ENCODE measurements at regions of chr1 and their contacts with region 1.

Region 1: DNA sequence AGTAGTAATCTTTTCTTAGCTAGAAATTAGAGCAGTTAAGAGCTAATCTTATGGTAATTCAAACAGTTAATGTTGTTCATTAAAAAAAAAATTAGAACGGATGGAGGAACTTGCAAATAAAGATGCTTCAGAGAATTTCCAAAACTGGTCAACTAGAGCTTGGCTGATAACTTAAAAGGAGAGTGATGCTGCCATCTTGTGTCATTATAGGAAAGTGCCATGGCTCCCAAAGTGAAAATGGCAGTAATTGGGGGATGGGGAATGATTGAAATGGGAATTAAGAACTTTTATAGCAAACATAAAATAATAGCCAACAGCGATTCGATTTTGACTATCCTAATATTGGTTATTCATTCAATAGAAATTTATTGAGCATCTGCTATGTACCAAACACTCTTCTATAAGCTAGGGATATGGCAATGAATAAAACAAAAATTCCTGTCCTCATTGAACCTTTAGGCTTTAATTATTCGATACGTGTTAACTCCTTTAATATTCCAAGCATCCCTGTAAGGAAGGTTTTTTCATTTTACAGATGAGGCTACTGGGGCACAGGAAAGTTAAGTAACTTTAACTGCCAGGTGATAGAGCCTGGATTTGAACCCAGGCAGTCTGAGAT is 5.7 kb upstream of the PLPP3 start:
- DNase-seq: peak; percentile 65
- H3K4me3 ChIP-seq: no peak overlapping the region
- H3K27ac ChIP-seq: no peak overlapping the region
- H3K4me1 ChIP-seq: peaks cover 1% of the 10 kb centered on the region
- CTCF ChIP-seq: peak; percentile 96

Region 2: GRCh38 chr1:55284852-55285251 is 1300.2 kb before region 1 on chr1:
- CTCF ChIA-PET with region 1: no interaction called
- POLR2A ChIA-PET with region 1: no interaction called
- intact Hi-C with region 1: loop called (anchors 2 kb)
- DNase-seq: peak; percentile 26
- H3K4me3 ChIP-seq: no peak overlapping the region
- H3K27ac ChIP-seq: no peak overlapping the region
- H3K4me1 ChIP-seq: peaks cover 10% of the 10 kb centered on the region
- CTCF ChIP-seq: peak; percentile 76

Region 3: DNA sequence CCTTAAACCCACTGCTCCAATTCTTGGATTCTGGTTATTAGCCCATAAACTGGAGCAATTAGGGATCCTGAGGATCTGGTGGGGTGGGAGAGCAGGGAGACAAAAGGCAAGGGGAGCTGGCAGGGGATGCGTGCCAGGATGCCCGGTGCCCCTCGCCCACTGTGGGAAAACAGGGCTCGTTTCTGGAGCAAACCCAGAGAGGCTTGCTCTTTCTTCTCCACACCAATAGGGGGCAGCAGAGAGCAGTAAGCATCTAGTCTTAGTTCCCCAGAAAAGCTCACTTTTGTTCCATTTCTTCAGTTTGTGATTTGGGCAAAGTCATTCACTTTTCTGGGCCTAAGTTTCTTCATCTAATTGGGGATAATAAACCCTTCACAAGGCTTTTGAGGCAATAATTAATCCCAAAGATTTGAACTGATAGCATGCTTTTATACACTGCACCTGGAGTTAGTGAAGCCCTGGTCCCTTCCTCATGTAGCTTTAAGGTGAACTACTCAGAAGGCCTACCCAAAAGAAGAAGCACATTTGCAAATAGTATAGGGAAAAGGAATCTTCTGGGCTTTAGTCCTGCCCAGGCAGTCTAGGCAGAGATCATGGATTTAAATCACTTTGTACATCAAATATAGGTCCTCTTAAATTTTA is 1209.3 kb before region 1 on chr1:
- CTCF ChIA-PET with region 1: no interaction called
- POLR2A ChIA-PET with region 1: no interaction called
- intact Hi-C with region 1: loop called (anchors 5 kb)
- DNase-seq: peak; percentile 55
- H3K4me3 ChIP-seq: no peak overlapping the region
- H3K27ac ChIP-seq: no peak overlapping the region
- H3K4me1 ChIP-seq: no peaks in the 10 kb centered on the region
- CTCF ChIP-seq: peak; percentile 91

Region 4: GRCh38 chr1:55478742-55479141 is 1106.3 kb before region 1 on chr1:
- CTCF ChIA-PET with region 1: interaction called, 4 read pairs
- POLR2A ChIA-PET with region 1: interaction called, 3 read pairs
- intact Hi-C with region 1: loop called (anchors 2 kb)
- DNase-seq: peak; percentile 29
- H3K4me3 ChIP-seq: no peak overlapping the region
- H3K27ac ChIP-seq: no peak overlapping the region
- H3K4me1 ChIP-seq: no peaks in the 10 kb centered on the region
- CTCF ChIP-seq: peak; percentile 72

Region 5: DNA sequence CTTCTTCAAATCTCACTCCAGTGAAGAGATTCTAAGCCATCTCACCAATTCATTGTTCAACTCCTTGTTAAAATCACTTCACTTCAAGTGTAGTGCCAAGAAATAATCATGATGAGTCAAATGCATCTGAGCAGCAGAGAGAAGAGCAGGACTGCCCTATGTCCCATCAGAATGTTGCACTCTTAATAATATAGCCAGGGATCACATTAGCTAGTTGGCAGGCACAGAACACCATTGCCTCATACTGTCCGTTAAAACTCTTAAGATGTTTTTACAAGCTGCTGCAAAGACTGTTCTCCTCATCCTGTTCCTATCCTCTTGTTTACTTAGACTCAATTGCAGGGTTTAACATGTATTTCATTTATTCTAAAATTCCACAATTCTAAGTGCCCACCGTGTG is 438.6 kb before region 1 on chr1:
- CTCF ChIA-PET with region 1: no interaction called
- POLR2A ChIA-PET with region 1: no interaction called
- intact Hi-C with region 1: loop called (anchors 10 kb)
- DNase-seq: no peak
- H3K4me3 ChIP-seq: no peak overlapping the region
- H3K27ac ChIP-seq: no peak overlapping the region
- H3K4me1 ChIP-seq: no peaks in the 10 kb centered on the region
- CTCF ChIP-seq: no peak

Region 6: DNA sequence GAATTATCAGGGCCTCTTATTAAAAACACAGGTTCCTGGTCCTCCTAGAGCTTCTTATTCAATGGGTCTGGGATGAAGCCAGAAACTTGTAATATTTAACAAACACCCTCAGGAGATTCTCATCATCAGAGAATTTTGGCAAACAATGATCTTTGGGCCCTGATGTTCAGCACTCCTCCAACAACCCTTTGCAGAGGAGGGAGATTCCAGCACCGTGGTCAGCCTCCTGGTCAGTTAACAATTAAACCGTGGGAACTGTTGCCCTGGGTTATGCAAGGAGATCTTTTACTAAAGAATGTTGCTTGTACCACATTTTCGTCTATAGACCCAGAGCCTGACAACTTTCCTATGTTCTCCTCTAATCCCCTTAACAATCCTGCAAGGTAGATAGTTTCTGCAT is 300.1 kb before region 1 on chr1:
- CTCF ChIA-PET with region 1: no interaction called
- POLR2A ChIA-PET with region 1: no interaction called
- intact Hi-C with region 1: loop called (anchors 10 kb)
- DNase-seq: no peak
- H3K4me3 ChIP-seq: no peak overlapping the region
- H3K27ac ChIP-seq: no peak overlapping the region
- H3K4me1 ChIP-seq: no peaks in the 10 kb centered on the region
- CTCF ChIP-seq: no peak

Region 7: GRCh38 chr1:56387071-56387740 is 197.8 kb before region 1 on chr1:
- CTCF ChIA-PET with region 1: no interaction called
- POLR2A ChIA-PET with region 1: no interaction called
- intact Hi-C with region 1: no loop called
- DNase-seq: no peak
- H3K4me3 ChIP-seq: no peak overlapping the region
- H3K27ac ChIP-seq: no peak overlapping the region
- H3K4me1 ChIP-seq: no peaks in the 10 kb centered on the region
- CTCF ChIP-seq: no peak

Region 8: DNA sequence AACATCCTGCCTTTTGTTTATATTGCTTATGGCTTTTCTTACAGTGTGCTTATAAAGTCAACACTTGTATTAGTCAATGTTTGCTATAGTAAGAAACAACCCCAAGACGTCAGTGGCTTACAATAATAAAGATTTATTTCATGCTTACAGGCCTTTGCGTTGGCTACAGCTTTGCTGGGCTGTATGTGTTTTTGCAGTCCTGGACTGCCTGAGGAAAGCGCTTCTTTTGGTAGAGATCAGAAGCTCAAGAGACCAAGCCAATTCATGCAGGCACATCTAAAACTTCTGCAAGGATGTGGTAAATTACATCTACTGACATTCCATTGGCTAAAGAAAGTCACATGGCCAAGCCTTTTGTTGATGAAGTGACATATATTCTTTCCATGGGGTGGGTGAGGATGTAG is 42.6 kb after region 1 on chr1:
- CTCF ChIA-PET with region 1: no interaction called
- POLR2A ChIA-PET with region 1: no interaction called
- intact Hi-C with region 1: no loop called
- DNase-seq: no peak
- H3K4me3 ChIP-seq: no peak overlapping the region
- H3K27ac ChIP-seq: no peak overlapping the region
- H3K4me1 ChIP-seq: no peaks in the 10 kb centered on the region
- CTCF ChIP-seq: no peak

Measured in OCI-LY7 (cell line).